Mammary epithelial cell (primary cell): ENCODE measurements at regions of chr14 and their contacts with region 1.

Region 1: DNA sequence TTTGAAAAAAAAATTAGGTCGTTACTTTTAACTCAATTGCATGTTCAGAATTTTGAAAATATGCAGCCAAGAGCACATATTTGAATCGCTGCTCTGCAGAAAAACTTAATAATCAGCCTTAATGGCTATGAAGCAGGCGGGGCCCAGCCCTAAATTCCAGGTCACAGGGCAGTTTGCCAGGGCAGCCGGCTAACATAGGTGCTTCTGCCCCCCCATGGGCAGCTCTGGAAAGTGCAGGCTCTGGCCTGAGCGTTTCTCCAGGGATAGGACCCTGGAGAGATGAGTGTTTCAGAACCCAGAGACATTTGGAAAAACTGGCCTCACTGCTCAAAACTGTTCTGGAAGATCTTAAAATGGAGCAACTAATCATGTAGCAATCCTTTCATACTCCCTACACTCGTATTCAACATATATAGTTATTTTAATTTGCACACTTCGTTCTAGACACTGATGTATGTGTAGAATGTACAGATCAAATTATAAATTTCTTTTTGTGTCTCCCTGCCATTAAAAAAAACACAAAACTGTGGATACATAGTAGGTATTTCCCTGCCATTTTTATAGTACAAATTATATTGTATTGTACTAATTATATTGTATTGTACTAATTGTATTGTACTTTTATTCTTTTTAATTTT is 26.0 kb upstream of the PTGR2 start:
- DNase-seq: peak; percentile 64
- H3K4me3 ChIP-seq: no peak overlapping the region
- H3K27ac ChIP-seq: no peak overlapping the region
- H3K4me1 ChIP-seq: peaks cover 15% of the 10 kb centered on the region
- H3K27me3 ChIP-seq: no peaks in the 10 kb centered on the region
- CTCF ChIP-seq: peak; percentile 80 to 95

Region 2: GRCh38 chr14:73728717-73729330 is 96.8 kb before region 1 on chr14:
- CTCF ChIA-PET with region 1: no interaction called
- dilution Hi-C with region 1: no loop called
- in situ Hi-C with region 1: loop called in 1 of 2 experiments (anchors 5 kb)
- intact Hi-C with region 1: loop called (anchors 1 kb)
- DNase-seq: peak; percentile 50
- H3K4me3 ChIP-seq: no peak overlapping the region
- H3K27ac ChIP-seq: no peak overlapping the region
- H3K4me1 ChIP-seq: peaks cover 42% of the 10 kb centered on the region
- H3K27me3 ChIP-seq: no peaks in the 10 kb centered on the region
- CTCF ChIP-seq: peak; percentile 92 to 95

Region 3: GRCh38 chr14:73741386-73741875 is 84.2 kb before region 1 on chr14:
- CTCF ChIA-PET with region 1: no interaction called
- dilution Hi-C with region 1: loop called (anchors 5 kb)
- in situ Hi-C with region 1: loop called in 1 of 2 experiments (anchors 5 kb)
- intact Hi-C with region 1: loop called (anchors 1 kb)
- DNase-seq: peak; percentile 72
- H3K4me3 ChIP-seq: peak overlapping the region in 1 of 3 experiments; percentile 14
- H3K27ac ChIP-seq: peak overlapping the region; percentile 70
- H3K4me1 ChIP-seq: peaks cover 75% of the 10 kb centered on the region
- H3K27me3 ChIP-seq: no peaks in the 10 kb centered on the region
- CTCF ChIP-seq: no peak

Region 4: GRCh38 chr14:73746520-73747378 is 78.9 kb before region 1 on chr14:
- CTCF ChIA-PET with region 1: no interaction called
- dilution Hi-C with region 1: loop called (anchors 5 kb)
- in situ Hi-C with region 1: loop called in 1 of 2 experiments (anchors 5 kb)
- intact Hi-C with region 1: loop called (anchors 1 kb)
- DNase-seq: no peak
- H3K4me3 ChIP-seq: no peak overlapping the region
- H3K27ac ChIP-seq: peak overlapping the region; percentile 88
- H3K4me1 ChIP-seq: peaks cover 84% of the 10 kb centered on the region
- H3K27me3 ChIP-seq: no peaks in the 10 kb centered on the region
- CTCF ChIP-seq: peak; percentile 22 to 52